ENCODE measurements at regions of chr6 and their contacts with region 1.

Region 1: GRCh38 chr6:12289933-12290820 is at the start of gene EDN1:
- DNase-seq: peak; percentile 50
- H3K4me3 ChIP-seq: peak within 1 kb of the TSS; percentile 71
- H3K27ac ChIP-seq: peak within 1 kb of the TSS; percentile 88
- H3K27me3 ChIP-seq: no peaks in the 10 kb centered on the region
- CTCF ChIP-seq: peak; percentile 70
- polyA plus RNA-seq, gene EDN1: 1.7 and 2.1 TPM in 2 replicates

Region 2: DNA sequence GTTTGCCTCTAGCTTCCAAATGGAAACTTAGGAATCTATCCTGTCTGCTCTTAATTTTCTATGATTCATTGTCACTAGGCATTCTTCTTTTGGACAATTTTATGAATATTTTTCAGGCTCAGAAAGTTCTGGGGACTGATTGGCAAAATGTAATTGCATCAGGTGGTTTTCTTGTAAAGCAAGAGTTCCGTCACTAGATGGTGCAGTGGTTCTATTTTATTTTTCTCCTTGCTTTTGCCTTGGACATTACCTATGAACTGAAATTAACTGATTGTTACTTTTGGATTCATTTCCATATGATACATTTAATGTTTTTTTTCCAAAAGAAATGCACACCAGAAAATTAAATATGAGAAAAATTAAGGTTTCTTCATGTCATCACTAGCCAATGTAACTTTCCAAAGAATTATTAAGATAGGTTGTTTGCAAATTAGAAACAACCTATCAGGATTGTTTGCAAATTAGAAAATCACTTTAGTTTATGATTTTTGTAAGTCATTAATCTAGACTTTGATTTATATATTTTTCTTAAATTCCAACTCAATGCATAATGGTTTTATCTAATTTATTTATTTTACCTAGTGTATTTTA is 704.7 kb before region 1 on chr6:
- CTCF ChIA-PET with region 1: interaction called, 73 read pairs
- POLR2A ChIA-PET with region 1: no interaction called
- DNase-seq: peak; percentile 55
- H3K4me3 ChIP-seq: no peak overlapping the region
- H3K27ac ChIP-seq: no peak overlapping the region
- H3K27me3 ChIP-seq: no peaks in the 10 kb centered on the region
- CTCF ChIP-seq: peak; percentile 58

Region 3: DNA sequence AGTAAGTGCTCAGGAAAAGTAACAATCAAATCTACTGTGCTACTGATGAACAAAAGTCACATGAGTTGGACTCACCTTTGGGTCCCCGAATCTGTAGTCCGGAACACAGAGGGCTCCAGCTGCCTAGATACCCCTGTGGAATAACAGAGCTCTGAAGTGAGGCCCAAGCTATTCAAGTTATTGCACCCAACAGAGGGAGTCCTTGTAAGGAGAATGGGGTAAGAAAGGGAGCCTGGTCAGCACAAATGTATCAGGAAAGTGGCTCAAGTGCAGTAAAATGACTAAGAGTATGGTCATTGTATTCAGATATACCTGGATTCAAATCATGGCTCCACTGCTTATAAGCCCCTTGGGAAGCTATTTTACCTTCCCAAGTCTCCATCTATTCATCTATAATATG is 20.9 kb after region 1 on chr6:
- CTCF ChIA-PET with region 1: interaction called, 20 read pairs
- POLR2A ChIA-PET with region 1: no interaction called
- DNase-seq: no peak
- H3K4me3 ChIP-seq: no peak overlapping the region
- H3K27ac ChIP-seq: no peak overlapping the region
- H3K27me3 ChIP-seq: no peaks in the 10 kb centered on the region
- CTCF ChIP-seq: peak; percentile 15; the same call in 1 of the 2 replicates

Region 4: DNA sequence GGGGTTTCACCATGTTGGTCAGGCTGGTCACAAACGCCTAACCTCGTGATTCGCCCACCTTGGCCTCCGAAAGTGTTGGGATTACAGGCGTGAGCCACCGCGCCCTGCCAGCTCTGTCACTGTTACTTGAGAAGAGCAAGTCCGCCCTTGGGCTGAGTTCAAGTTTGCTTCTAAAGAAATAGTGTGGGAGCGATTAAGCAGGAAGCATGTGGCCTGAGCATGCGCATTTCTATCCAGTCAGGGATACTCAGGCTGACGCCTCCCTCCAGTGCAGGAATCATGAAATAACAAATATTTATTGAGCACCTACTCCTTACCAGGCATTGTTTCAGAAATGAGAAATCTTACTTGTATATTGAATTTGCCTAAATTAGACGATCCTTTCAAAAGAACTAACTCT is 166.2 kb after region 1 on chr6:
- CTCF ChIA-PET with region 1: no interaction called
- POLR2A ChIA-PET with region 1: interaction called, 11 read pairs
- DNase-seq: no peak
- H3K4me3 ChIP-seq: no peak overlapping the region
- H3K27ac ChIP-seq: no peak overlapping the region
- H3K27me3 ChIP-seq: peaks cover 3% of the 10 kb centered on the region
- CTCF ChIP-seq: no peak

Region 5: GRCh38 chr6:12572896-12573827 is 283.0 kb after region 1 on chr6:
- CTCF ChIA-PET with region 1: interaction called, 10 read pairs
- POLR2A ChIA-PET with region 1: no interaction called
- DNase-seq: no peak
- H3K4me3 ChIP-seq: no peak overlapping the region
- H3K27ac ChIP-seq: no peak overlapping the region
- H3K27me3 ChIP-seq: no peaks in the 10 kb centered on the region
- CTCF ChIP-seq: no peak